ENCODE measurements at regions of chr19 and their contacts with region 1.

Region 1: DNA sequence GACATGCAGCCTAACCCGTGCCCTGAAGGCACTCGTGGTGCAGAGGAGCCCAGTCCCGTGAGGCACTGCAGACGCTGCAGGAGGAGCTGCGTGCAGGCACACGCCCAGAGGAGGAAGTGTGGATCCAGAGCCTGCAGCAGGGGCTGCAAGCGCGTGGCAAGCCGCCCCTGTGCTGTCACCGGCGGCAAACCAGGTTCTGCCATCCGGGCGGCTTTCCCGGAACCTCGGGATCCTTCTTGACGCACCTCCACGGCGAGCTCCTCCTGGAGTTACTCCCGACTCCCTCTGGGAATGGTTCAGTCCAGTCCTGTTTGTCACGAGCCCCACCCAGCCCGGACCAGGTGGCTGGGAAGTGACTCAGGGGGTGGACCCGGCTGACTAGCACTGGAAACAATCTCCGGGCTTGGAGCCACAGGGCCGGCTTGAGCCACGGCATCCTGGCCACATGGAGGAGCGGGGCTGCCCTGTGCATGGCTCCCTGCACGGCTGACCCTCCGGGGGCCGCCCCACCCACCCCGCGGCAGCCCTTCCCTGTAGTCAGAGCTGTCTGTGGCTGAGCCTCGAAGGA is 10.2 kb downstream of the DPP9 start:
- DNase-seq: peak; percentile 94
- H3K4me3 ChIP-seq: no peak overlapping the region
- H3K27ac ChIP-seq: peak overlapping the region; percentile 69
- H3K4me1 ChIP-seq: peaks cover 38% of the 10 kb centered on the region
- H3K27me3 ChIP-seq: no peaks in the 10 kb centered on the region
- CTCF ChIP-seq: no peak
- POLR2A ChIP-seq: peak; percentile 79

Region 2: DNA sequence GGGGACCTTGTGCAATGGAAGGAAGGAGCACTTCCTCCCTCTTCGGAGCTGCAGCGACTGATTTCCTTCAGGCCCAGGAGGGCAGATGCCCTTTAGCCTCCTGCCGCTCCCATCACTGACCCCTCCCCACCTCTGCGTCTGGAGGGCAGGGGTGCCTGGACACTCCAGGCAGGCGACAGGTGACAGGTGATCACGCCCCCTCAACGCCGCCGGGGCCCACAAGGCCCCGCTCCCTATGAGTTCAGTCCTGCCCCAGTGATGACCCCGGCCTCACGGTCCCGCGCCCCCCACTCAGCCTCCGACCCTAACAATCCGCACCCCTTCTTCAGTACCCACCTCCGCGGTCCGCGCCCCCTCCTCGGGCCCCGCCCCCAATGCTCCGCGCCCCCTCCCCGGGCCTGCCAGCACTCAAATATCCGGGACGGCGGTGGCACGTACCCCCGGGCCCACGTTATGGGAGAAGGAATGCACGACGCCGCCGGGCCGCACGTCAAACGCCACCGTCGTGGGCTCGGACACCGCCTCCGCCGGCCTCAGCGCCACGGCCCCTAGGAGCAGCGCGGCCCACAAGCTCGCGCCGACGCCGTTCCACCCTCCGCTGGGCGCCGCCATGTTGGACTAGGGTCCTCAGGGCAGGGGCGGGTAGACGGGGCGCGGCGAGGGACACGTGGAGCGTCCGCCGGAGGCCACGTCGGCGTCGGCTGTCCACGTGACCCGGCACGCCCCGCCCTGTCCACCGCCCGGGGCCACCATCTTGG is 43.6 kb before region 1 on chr19 and contains the start of gene MYDGF:
- CTCF ChIA-PET with region 1: no interaction called
- POLR2A ChIA-PET with region 1: no interaction called
- dilution Hi-C with region 1: no loop called
- intact Hi-C with region 1: loop called (anchors 5 kb)
- DNase-seq: peak; percentile 80
- H3K4me3 ChIP-seq: peak within 1 kb of the TSS; percentile 74 to 97 (median 80)
- H3K27ac ChIP-seq: peak within 1 kb of the TSS; percentile 44
- H3K4me1 ChIP-seq: peaks cover 13% of the 10 kb centered on the region
- H3K27me3 ChIP-seq: no peaks in the 10 kb centered on the region
- CTCF ChIP-seq: no peak
- POLR2A ChIP-seq: peak; percentile 80
- total RNA-seq, gene MYDGF: 187 and 191 TPM in 2 replicates

Region 3: DNA sequence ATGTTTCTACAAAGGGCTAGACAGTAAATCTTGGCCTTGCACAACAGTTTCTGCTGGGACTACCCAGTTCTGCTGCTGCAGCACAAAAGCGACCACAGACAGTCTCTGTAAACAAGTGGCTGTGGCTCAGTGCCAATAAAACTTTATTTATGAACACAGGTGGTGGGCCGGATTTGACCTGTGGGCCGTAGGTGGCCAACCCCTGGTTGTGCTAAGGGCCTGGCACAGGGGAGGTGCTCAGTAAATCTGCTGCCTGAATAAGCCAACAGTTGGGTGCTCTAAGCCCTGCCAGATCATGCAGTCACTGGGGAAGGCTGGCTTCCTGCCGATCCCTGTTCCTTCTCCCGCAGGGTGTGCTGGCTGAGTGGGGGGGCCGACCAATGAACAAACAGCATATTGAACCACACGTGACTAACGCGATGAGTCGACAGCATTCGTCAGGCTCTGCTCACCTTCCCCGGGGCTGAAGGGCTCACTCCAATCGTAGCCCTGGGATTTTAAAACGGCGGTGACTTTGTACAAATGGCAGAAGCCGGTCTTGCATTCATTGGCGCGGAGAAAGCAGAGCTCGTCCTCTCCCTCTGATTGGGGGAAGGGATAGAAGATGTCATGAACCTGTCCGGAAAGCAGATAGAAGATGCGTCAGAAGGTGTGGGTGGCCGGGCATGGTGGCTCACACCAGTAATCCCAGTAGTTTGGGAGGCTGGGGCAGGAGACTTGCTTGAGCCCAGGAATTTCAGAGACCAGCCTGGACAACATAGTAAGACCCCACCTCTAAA is 19.1 kb before region 1 on chr19:
- CTCF ChIA-PET with region 1: interaction called, 4 read pairs
- POLR2A ChIA-PET with region 1: no interaction called
- dilution Hi-C with region 1: no loop called
- intact Hi-C with region 1: loop called (anchors 1 kb)
- DNase-seq: peak; percentile 78
- H3K4me3 ChIP-seq: no peak overlapping the region
- H3K27ac ChIP-seq: peak overlapping the region; percentile 45
- H3K4me1 ChIP-seq: peaks cover 9% of the 10 kb centered on the region
- H3K27me3 ChIP-seq: no peaks in the 10 kb centered on the region
- CTCF ChIP-seq: no peak
- POLR2A ChIP-seq: peak; percentile 31